Activated B cell treated with CpG ODN at 0.5 μM for 24 hours (primary cell): ENCODE measurements at regions of chr18 and their contacts with region 1.

Region 1: DNA sequence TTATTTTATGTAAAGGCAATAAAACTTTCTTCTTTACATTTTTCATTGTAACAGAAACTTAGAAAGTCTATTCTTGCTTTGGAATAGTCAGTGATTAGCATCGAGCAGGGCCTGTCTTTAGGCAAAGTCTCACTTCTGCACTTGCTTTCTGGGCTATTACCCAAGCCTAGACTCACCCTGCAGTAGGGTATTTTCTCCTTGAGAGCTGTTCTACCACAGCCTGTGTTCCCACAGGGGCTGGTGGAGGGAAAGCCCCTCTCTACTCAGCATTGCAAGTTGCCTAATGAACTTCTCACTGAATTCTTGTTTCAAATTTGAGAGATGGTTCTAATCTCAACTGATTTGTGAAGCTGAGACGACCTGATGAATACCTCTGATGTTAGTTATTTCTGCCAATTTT is 111.7 kb upstream of the KLHL14 start:
- DNase-seq: peak; percentile 51
- ATAC-seq: peak; percentile 99
- H3K4me3 Mint-ChIP-seq: peak overlapping the region; percentile 53
- H3K27ac Mint-ChIP-seq: peak overlapping the region; percentile 89
- H3K4me1 Mint-ChIP-seq: peaks cover 86% of the 10 kb centered on the region
- H3K27me3 Mint-ChIP-seq: no peaks in the 10 kb centered on the region
- CTCF ChIP-seq: no peak

Region 2: DNA sequence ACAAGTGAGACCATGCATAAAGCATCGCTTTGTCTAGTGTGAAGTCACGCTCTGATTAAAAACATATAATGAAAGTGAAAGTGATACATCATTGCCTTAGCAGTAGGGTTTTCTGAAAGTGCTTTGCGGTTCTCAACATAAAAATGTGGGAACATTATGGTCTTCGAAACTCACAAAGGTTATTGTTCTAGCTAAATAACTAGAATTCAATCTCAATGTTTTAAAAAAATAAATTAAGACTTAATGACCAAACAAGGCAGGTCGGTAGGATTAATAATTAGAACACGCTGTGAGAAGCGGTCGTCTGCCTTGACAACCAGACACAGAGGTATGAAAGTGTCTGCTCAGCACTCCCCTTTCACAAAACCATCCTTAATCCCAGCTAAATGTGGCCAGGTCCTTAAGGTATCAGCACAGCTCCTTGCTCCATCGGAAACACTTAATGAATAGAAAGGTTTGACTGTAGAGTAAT is 153.9 kb before region 1 on chr18:
- CTCF ChIA-PET with region 1: no interaction called
- POLR2A ChIA-PET with region 1: no interaction called
- intact Hi-C with region 1: loop called (anchors 2 kb)
- DNase-seq: no peak
- ATAC-seq: peak; percentile 88
- H3K4me3 Mint-ChIP-seq: peak overlapping the region; percentile 72
- H3K27ac Mint-ChIP-seq: peak overlapping the region; percentile 86
- H3K4me1 Mint-ChIP-seq: peaks cover 50% of the 10 kb centered on the region
- H3K27me3 Mint-ChIP-seq: no peaks in the 10 kb centered on the region
- CTCF ChIP-seq: no peak

Region 3: DNA sequence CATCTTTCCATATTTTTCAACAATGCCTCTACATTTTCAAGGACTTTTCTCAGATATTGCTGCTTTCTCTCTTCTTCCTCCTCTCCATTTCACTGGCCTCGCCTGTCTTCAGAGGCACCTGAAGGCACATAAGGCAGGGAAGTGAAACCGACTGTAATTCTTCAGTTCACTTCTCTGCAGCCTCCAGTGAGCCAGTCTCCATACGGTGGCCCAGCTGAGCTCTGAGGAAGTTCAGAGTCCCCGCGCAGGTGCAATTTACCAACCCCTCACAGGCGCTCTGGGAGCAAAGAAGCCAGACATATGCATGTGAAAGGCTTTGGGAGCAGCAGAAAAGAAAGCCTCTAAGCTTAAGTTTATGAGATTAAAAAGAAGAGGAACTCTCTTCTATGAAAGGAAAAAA is 124.2 kb before region 1 on chr18:
- CTCF ChIA-PET with region 1: no interaction called
- POLR2A ChIA-PET with region 1: no interaction called
- intact Hi-C with region 1: loop called (anchors 1 kb)
- DNase-seq: peak; percentile 57
- ATAC-seq: peak; percentile 97
- H3K4me3 Mint-ChIP-seq: peak overlapping the region; percentile 60
- H3K27ac Mint-ChIP-seq: peak overlapping the region; percentile 83
- H3K4me1 Mint-ChIP-seq: peaks cover 93% of the 10 kb centered on the region
- H3K27me3 Mint-ChIP-seq: no peaks in the 10 kb centered on the region
- CTCF ChIP-seq: no peak

Region 4: GRCh38 chr18:32803568-32803967 is 81.0 kb before region 1 on chr18:
- CTCF ChIA-PET with region 1: no interaction called
- POLR2A ChIA-PET with region 1: interaction called, 11 read pairs
- intact Hi-C with region 1: loop called (anchors 1 kb)
- DNase-seq: no peak
- ATAC-seq: peak; percentile 88
- H3K4me3 Mint-ChIP-seq: peak overlapping the region; percentile 75
- H3K27ac Mint-ChIP-seq: peak overlapping the region; percentile 98
- H3K4me1 Mint-ChIP-seq: peaks cover 53% of the 10 kb centered on the region
- H3K27me3 Mint-ChIP-seq: no peaks in the 10 kb centered on the region
- CTCF ChIP-seq: no peak

Region 5: GRCh38 chr18:32868406-32868805 is 16.1 kb before region 1 on chr18:
- CTCF ChIA-PET with region 1: interaction called, 13 read pairs
- POLR2A ChIA-PET with region 1: interaction called, 44 read pairs
- intact Hi-C with region 1: loop called (anchors 1 kb)
- DNase-seq: no peak
- ATAC-seq: peak; percentile 62
- H3K4me3 Mint-ChIP-seq: peak overlapping the region; percentile 72
- H3K27ac Mint-ChIP-seq: peak overlapping the region; percentile 95
- H3K4me1 Mint-ChIP-seq: peaks cover 90% of the 10 kb centered on the region
- H3K27me3 Mint-ChIP-seq: no peaks in the 10 kb centered on the region
- CTCF ChIP-seq: no peak

Region 6: GRCh38 chr18:32899819-32900218 is 15.3 kb after region 1 on chr18:
- CTCF ChIA-PET with region 1: interaction called, 3 read pairs
- POLR2A ChIA-PET with region 1: interaction called, 4 read pairs
- intact Hi-C with region 1: loop called (anchors 2 kb)
- DNase-seq: no peak
- ATAC-seq: no peak
- H3K4me3 Mint-ChIP-seq: no peak overlapping the region
- H3K27ac Mint-ChIP-seq: no peak overlapping the region
- H3K4me1 Mint-ChIP-seq: peaks cover 25% of the 10 kb centered on the region
- H3K27me3 Mint-ChIP-seq: no peaks in the 10 kb centered on the region
- CTCF ChIP-seq: no peak

Region 7: DNA sequence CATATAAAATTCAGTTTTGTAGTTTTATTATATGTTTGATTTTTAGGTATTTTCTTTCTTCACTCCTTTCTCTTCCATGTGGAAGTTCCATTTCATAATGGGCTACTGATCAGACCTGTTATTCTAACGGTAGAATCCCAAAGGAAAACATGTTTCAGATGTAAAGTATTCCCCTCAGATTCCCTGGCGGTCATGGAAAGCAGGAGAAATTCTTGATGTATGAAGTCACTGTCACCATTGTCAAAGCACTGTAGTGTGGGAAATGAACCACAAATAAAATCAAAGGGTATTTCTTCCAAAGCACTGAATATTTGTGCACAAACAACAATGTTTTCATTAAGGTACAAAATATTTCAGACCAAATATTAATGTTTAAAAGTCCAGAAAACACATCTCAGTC is 125.6 kb after region 1 on chr18:
- CTCF ChIA-PET with region 1: no interaction called
- POLR2A ChIA-PET with region 1: no interaction called
- intact Hi-C with region 1: no loop called
- DNase-seq: no peak
- ATAC-seq: no peak
- H3K4me3 Mint-ChIP-seq: no peak overlapping the region
- H3K27ac Mint-ChIP-seq: no peak overlapping the region
- H3K4me1 Mint-ChIP-seq: no peaks in the 10 kb centered on the region
- H3K27me3 Mint-ChIP-seq: peaks cover 7% of the 10 kb centered on the region
- CTCF ChIP-seq: no peak